GM12878 (cell line): ENCODE measurements at regions of chr2 and their contacts with region 1.

Region 1: DNA sequence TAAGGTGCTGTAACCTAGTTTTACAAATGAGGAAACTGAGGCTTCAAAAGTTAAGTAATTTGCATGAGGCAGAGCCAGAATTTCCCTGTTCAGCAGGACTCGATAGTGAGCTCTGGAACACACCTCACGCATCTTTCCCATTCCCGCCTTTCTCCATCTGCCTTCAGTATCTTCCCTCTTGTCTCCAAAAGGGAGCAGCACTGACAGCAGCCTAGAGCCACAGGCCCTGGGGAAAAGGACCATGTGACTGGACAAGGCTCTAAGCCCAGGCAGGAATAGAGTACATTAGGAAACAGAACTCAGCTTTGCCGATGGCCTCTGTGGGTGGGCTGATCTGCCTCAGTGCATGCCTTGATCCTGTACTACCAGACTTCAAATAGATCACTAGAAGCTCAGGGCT is 21.5 kb downstream of the GPR155 start:
- DNase-seq: no peak
- ATAC-seq: no peak
- H3K4me3 ChIP-seq: no peak overlapping the region
- H3K27ac ChIP-seq: no peak overlapping the region
- H3K4me1 ChIP-seq: no peaks in the 10 kb centered on the region
- H3K27me3 ChIP-seq: no peaks in the 10 kb centered on the region
- CTCF ChIP-seq: no peak
- EP300 ChIP-seq: no peak
- POLR2A ChIP-seq: no peak
- RAD21 ChIP-seq: no peak

Region 2: GRCh38 chr2:174350018-174350417 is 115.3 kb before region 1 on chr2:
- CTCF ChIA-PET with region 1: no interaction called
- POLR2A ChIA-PET with region 1: no interaction called
- RAD21 ChIA-PET with region 1: no interaction called
- SMC1A ChIA-PET with region 1: no interaction called
- in situ Hi-C with region 1: no loop called
- intact Hi-C with region 1: no loop called
- DNase-seq: no peak
- ATAC-seq: peak; percentile 36; the same call in 1 of the 3 replicates
- H3K4me3 ChIP-seq: no peak overlapping the region
- H3K27ac ChIP-seq: no peak overlapping the region
- H3K4me1 ChIP-seq: no peaks in the 10 kb centered on the region
- H3K27me3 ChIP-seq: no peaks in the 10 kb centered on the region
- CTCF ChIP-seq: peak; percentile 20 to 31 (median 26); a peak in 3 of 6 replicates
- EP300 ChIP-seq: no peak
- POLR2A ChIP-seq: no peak
- RAD21 ChIP-seq: peak; percentile 17; the same call in 1 of the 2 replicates

Region 3: GRCh38 chr2:174442546-174443510 is 22.5 kb before region 1 on chr2:
- CTCF ChIA-PET with region 1: interaction called, 13 read pairs
- POLR2A ChIA-PET with region 1: no interaction called
- RAD21 ChIA-PET with region 1: interaction called, 4 read pairs
- SMC1A ChIA-PET with region 1: interaction called, 3 read pairs
- in situ Hi-C with region 1: no loop called
- intact Hi-C with region 1: no loop called
- DNase-seq: no peak
- ATAC-seq: no peak
- H3K4me3 ChIP-seq: no peak overlapping the region
- H3K27ac ChIP-seq: no peak overlapping the region
- H3K4me1 ChIP-seq: no peaks in the 10 kb centered on the region
- H3K27me3 ChIP-seq: no peaks in the 10 kb centered on the region
- CTCF ChIP-seq: no peak
- EP300 ChIP-seq: no peak
- POLR2A ChIP-seq: no peak
- RAD21 ChIP-seq: no peak

Region 4: GRCh38 chr2:174492963-174493431 is 27.7 kb after region 1 on chr2:
- CTCF ChIA-PET with region 1: interaction called, 49 read pairs
- POLR2A ChIA-PET with region 1: interaction called, 3 read pairs
- RAD21 ChIA-PET with region 1: interaction called, 17 read pairs
- SMC1A ChIA-PET with region 1: interaction called, 46 read pairs
- in situ Hi-C with region 1: no loop called
- intact Hi-C with region 1: no loop called
- DNase-seq: peak; percentile 85
- ATAC-seq: peak; percentile 94
- H3K4me3 ChIP-seq: peak overlapping the region; percentile 41
- H3K27ac ChIP-seq: peak overlapping the region; percentile 87
- H3K4me1 ChIP-seq: peaks cover 17% of the 10 kb centered on the region; the same call in 1 of the 2 replicates
- H3K27me3 ChIP-seq: no peaks in the 10 kb centered on the region
- CTCF ChIP-seq: no peak
- EP300 ChIP-seq: peak; percentile 33 to 65; a peak in 2 of 4 replicates
- POLR2A ChIP-seq: no peak
- RAD21 ChIP-seq: no peak

Region 5: DNA sequence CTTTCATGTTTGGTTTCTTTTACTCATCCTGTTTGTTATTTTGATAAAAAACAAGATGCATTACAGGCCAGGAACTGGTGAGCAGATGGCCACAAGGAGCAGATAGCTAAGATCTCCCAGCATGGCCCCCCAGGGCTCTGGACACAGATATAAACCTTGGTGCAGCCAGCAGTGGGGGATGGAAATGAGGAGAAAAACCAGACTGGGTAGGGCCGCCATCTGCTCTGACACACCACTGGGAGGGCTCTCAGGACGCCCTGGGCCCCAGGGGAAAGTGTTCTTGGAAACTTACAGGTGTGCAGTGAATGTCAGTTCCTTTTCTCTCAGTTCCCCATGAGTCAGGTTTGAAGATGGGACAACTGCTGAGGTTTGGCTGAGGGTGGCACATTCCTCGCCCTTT is 71.0 kb after region 1 on chr2:
- CTCF ChIA-PET with region 1: interaction called, 33 read pairs
- POLR2A ChIA-PET with region 1: interaction called, 3 read pairs
- RAD21 ChIA-PET with region 1: interaction called, 6 read pairs
- SMC1A ChIA-PET with region 1: interaction called, 6 read pairs
- in situ Hi-C with region 1: no loop called
- intact Hi-C with region 1: no loop called
- DNase-seq: no peak
- ATAC-seq: peak; percentile 33
- H3K4me3 ChIP-seq: no peak overlapping the region
- H3K27ac ChIP-seq: no peak overlapping the region
- H3K4me1 ChIP-seq: peaks cover 5% of the 10 kb centered on the region
- H3K27me3 ChIP-seq: no peaks in the 10 kb centered on the region
- CTCF ChIP-seq: no peak
- EP300 ChIP-seq: no peak
- POLR2A ChIP-seq: no peak
- RAD21 ChIP-seq: no peak

Region 6: DNA sequence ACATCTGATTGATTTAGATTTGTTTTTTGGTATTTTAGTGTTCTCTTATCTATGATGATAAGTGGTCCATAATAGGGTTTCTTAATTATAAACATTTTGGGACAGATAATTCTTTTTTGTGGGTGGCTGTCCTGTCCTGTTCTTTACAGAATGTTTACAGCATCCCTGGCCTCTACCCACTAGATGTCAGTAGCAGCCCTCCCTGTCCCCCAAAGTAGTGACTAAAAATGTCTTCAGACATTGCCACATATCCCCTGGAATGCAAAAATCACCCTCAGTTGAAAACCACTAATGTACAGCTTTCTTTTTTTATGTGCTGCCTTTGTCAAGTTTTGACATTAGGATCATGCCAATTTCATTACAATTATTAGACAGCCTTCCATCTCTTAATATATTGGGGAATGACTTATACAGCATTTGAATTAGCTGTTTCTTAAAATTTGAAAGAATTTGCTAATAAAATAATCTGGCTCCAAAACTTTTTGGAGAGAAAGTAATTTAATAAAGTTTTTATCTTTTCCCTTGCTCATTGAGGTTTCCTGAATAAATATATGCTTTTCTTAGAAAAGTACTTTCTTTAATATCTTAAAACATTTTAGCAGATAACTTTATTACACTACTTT is 112.8 kb after region 1 on chr2:
- CTCF ChIA-PET with region 1: interaction called, 17 read pairs
- POLR2A ChIA-PET with region 1: no interaction called
- RAD21 ChIA-PET with region 1: interaction called, 8 read pairs
- SMC1A ChIA-PET with region 1: interaction called, 12 read pairs
- in situ Hi-C with region 1: no loop called
- intact Hi-C with region 1: no loop called
- DNase-seq: no peak
- ATAC-seq: peak; percentile 71
- H3K4me3 ChIP-seq: no peak overlapping the region
- H3K27ac ChIP-seq: no peak overlapping the region
- H3K4me1 ChIP-seq: peaks cover 7% of the 10 kb centered on the region
- H3K27me3 ChIP-seq: no peaks in the 10 kb centered on the region
- CTCF ChIP-seq: peak; percentile 60 to 77 (median 64); a peak in 5 of 6 replicates
- EP300 ChIP-seq: no peak
- POLR2A ChIP-seq: no peak
- RAD21 ChIP-seq: peak; percentile 88

Region 7: GRCh38 chr2:174634130-174635014 is 169.0 kb after region 1 on chr2:
- CTCF ChIA-PET with region 1: interaction called, 9 read pairs
- POLR2A ChIA-PET with region 1: no interaction called
- RAD21 ChIA-PET with region 1: interaction called, 14 read pairs
- SMC1A ChIA-PET with region 1: interaction called, 3 read pairs
- in situ Hi-C with region 1: no loop called
- intact Hi-C with region 1: no loop called
- DNase-seq: peak; percentile 65
- ATAC-seq: peak; percentile 85
- H3K4me3 ChIP-seq: peak overlapping the region; percentile 84
- H3K27ac ChIP-seq: peak overlapping the region; percentile 91
- H3K4me1 ChIP-seq: peaks cover 22% of the 10 kb centered on the region
- H3K27me3 ChIP-seq: no peaks in the 10 kb centered on the region
- CTCF ChIP-seq: peak; percentile 35 to 47 (median 45); a peak in 5 of 6 replicates
- EP300 ChIP-seq: no peak
- POLR2A ChIP-seq: peak; percentile 60
- RAD21 ChIP-seq: no peak

Region 8: GRCh38 chr2:174697255-174697654 is 231.9 kb after region 1 on chr2:
- CTCF ChIA-PET with region 1: interaction called, 99 read pairs
- POLR2A ChIA-PET with region 1: no interaction called
- RAD21 ChIA-PET with region 1: interaction called, 16 read pairs
- SMC1A ChIA-PET with region 1: interaction called, 38 read pairs
- in situ Hi-C with region 1: loop called (anchors 5 kb)
- intact Hi-C with region 1: no loop called
- DNase-seq: no peak
- ATAC-seq: peak; percentile 98
- H3K4me3 ChIP-seq: no peak overlapping the region
- H3K27ac ChIP-seq: no peak overlapping the region
- H3K4me1 ChIP-seq: no peaks in the 10 kb centered on the region
- H3K27me3 ChIP-seq: no peaks in the 10 kb centered on the region; a peak in 2 of 4 replicates
- CTCF ChIP-seq: peak; percentile 89 to 91 (median 89)
- EP300 ChIP-seq: no peak
- POLR2A ChIP-seq: no peak
- RAD21 ChIP-seq: peak; percentile 66